Thyroid gland (tissue), 4 donors: ENCODE measurements at regions of chr19 and their contacts with region 1.

Region 1: GRCh38 chr19:47436712-47437401 is 17.5 kb upstream of the MEIS3 start:
- DNase-seq: peak; percentile 75 to 83
- H3K4me3 ChIP-seq: no peak overlapping the region
- H3K27ac ChIP-seq: no peak overlapping the region
- H3K4me1 ChIP-seq: no peaks in the 10 kb centered on the region
- H3K27me3 ChIP-seq: peaks cover 3% of the 10 kb centered on the region
- CTCF ChIP-seq: peak; percentile 69 to 94 (median 92)
- POLR2A ChIP-seq: no peak

Region 2: DNA sequence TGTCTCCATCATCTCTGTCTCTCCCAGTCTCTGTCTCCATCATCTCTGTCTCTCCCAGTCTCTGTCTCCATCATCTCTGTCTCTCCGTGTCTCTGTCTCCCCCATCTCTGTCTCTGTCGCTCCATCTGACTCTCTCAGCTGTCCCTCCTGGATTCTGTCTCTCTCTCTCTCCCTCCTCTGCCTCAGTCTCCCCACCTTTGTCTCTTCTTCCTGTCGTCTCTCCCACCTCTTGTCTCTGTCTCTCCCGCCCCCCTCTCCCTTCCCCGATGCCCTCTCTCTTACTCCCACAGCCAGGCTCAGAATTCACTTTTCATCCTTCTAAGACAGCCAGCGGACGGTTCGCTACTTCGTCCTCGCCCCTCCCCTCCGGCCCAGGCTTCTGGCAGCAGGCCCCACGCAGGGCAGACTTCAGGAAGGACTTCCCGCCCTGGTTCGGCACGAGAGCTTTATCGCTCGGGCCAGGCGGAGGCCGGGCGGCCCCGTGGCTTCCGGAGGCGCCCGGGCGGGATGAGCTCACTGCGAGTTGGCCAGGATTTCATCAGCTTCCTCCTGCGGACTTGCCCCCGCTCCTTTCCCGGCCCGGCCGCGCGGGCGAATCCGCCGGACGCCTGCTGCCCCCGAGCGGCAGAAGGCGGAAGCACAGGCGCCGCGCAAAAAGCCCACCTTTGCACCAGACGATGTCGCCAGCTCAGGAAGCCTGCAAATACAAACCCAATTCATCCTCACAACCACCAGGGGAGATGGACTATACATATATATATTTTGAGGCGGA is 192.9 kb before region 1 on chr19:
- intact Hi-C with region 1: no loop called
- DNase-seq: peak; percentile 83 to 86
- H3K4me3 ChIP-seq: no peak overlapping the region
- H3K27ac ChIP-seq: no peak overlapping the region
- H3K4me1 ChIP-seq: peaks cover 11 to 38% of the 10 kb centered on the region in 2 donors
- H3K27me3 ChIP-seq: no peaks in the 10 kb centered on the region
- CTCF ChIP-seq: peak; percentile 94 to 99 (median 98)
- POLR2A ChIP-seq: no peak

Region 3: DNA sequence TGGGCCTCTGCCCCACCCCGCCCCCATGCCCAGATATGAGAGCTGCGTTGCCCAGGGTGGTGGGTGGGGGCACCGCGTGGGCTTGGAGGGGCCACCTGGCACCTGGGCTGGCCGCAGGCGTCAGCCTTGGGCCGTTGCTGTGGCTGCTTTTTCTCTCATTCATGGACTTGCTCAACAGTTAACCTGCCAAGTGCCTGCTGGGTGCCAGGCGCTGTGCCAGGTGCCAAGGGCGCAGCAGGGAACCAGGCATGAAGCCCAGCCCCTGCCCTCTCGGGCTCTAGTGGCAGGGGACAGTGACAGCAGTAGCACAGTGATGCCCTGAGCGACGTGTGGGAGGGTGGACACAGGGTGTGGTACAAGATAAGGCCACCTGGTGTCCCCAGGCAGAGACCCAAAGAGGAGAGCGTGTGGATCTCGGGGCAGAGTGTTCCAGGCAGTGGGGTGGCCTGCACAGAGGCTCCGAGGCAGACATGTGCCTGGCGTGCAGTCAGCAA is 59.6 kb before region 1 on chr19:
- intact Hi-C with region 1: no loop called
- DNase-seq: peak; percentile 17 to 18
- H3K4me3 ChIP-seq: no peak overlapping the region
- H3K27ac ChIP-seq: no peak overlapping the region
- H3K4me1 ChIP-seq: no peaks in the 10 kb centered on the region
- H3K27me3 ChIP-seq: no peaks in the 10 kb centered on the region
- CTCF ChIP-seq: no peak
- POLR2A ChIP-seq: no peak

Region 4: GRCh38 chr19:47391510-47392223 is 45.2 kb before region 1 on chr19:
- intact Hi-C with region 1: no loop called
- DNase-seq: peak; percentile 58 to 78
- H3K4me3 ChIP-seq: no peak overlapping the region
- H3K27ac ChIP-seq: no peak overlapping the region
- H3K4me1 ChIP-seq: no peaks in the 10 kb centered on the region
- H3K27me3 ChIP-seq: no peaks in the 10 kb centered on the region
- CTCF ChIP-seq: peak; percentile 39 to 87 (median 76)
- POLR2A ChIP-seq: no peak

Region 5: GRCh38 chr19:47483800-47484690 is 47.2 kb after region 1 on chr19 and contains the start of gene KPTN:
- intact Hi-C with region 1: no loop called
- DNase-seq: peak; percentile 84 to 87
- H3K4me3 ChIP-seq: peak within 1 kb of the TSS; percentile 52 to 56 (median 54)
- H3K27ac ChIP-seq: peak within 1 kb of the TSS; percentile 75 to 83 (median 79)
- H3K4me1 ChIP-seq: peaks cover 5 to 22% of the 10 kb centered on the region in 2 donors
- H3K27me3 ChIP-seq: no peaks in the 10 kb centered on the region
- CTCF ChIP-seq: peak; percentile 72 to 88 (median 78)
- POLR2A ChIP-seq: peak in 1 of 2 donors; percentile 47
- total RNA-seq, gene KPTN: 7.0 to 8.9 (median 7.3) TPM

Region 6: GRCh38 chr19:47514869-47515588 is 78.2 kb after region 1 on chr19 and contains the start of gene NAPA:
- intact Hi-C with region 1: loop called (anchors 10 kb)
- DNase-seq: peak; percentile 100
- H3K4me3 ChIP-seq: peak within 1 kb of the TSS; percentile 68 to 100 (median 70)
- H3K27ac ChIP-seq: peak within 1 kb of the TSS; percentile 85 to 94 (median 92)
- H3K4me1 ChIP-seq: peaks cover 41 to 43% of the 10 kb centered on the region in 2 donors
- H3K27me3 ChIP-seq: no peaks in the 10 kb centered on the region
- CTCF ChIP-seq: peak in 1 of 6 experiments; percentile 97
- POLR2A ChIP-seq: peak; percentile 62 to 91
- total RNA-seq, gene NAPA: 146 to 354 (median 213) TPM

Region 7: GRCh38 chr19:47697863-47698609 is 261.2 kb after region 1 on chr19:
- intact Hi-C with region 1: loop called (anchors 2 kb)
- DNase-seq: peak; percentile 60 to 65
- H3K4me3 ChIP-seq: no peak overlapping the region
- H3K27ac ChIP-seq: peak overlapping the region in 2 of 3 donors; percentile 24 to 33
- H3K4me1 ChIP-seq: no peaks in the 10 kb centered on the region
- H3K27me3 ChIP-seq: no peaks in the 10 kb centered on the region
- CTCF ChIP-seq: peak; percentile 93 to 98 (median 96)
- POLR2A ChIP-seq: no peak